CD4-positive, alpha-beta memory T cell (primary cell): ENCODE measurements at regions of chr15 and their contacts with region 1.

Region 1: GRCh38 chr15:91706322-91707032 is 147.0 kb upstream of the SLCO3A1 start:
- DNase-seq: peak; percentile 82 to 92 (median 86)
- H3K4me3 ChIP-seq: no peak overlapping the region
- H3K4me3 Mint-ChIP-seq: peak overlapping the region in 7 of 8 donors; percentile 19 to 89 (median 71)
- H3K27ac ChIP-seq: no peak overlapping the region
- H3K27ac Mint-ChIP-seq: peak overlapping the region; percentile 68 to 92 (median 81)
- H3K4me1 ChIP-seq: peaks cover 17% of the 10 kb centered on the region
- H3K4me1 Mint-ChIP-seq: peaks cover 8 to 32% (median 14%) of the 10 kb centered on the region in 4 donors
- H3K27me3 ChIP-seq: no peaks in the 10 kb centered on the region
- H3K27me3 Mint-ChIP-seq: peaks cover 0 to 2% of the 10 kb centered on the region in 2 donors

Region 2: GRCh38 chr15:91214675-91215590 is 491.5 kb before region 1 on chr15:
- CTCF ChIA-PET with region 1: no interaction called
- POLR2A ChIA-PET with region 1: no interaction called
- intact Hi-C with region 1: no loop called
- DNase-seq: no peak
- H3K4me3 ChIP-seq: no peak overlapping the region
- H3K4me3 Mint-ChIP-seq: no peak overlapping the region
- H3K27ac ChIP-seq: no peak overlapping the region
- H3K27ac Mint-ChIP-seq: no peak overlapping the region
- H3K4me1 ChIP-seq: no peaks in the 10 kb centered on the region
- H3K4me1 Mint-ChIP-seq: no peaks in the 10 kb centered on the region
- H3K27me3 ChIP-seq: no peaks in the 10 kb centered on the region
- H3K27me3 Mint-ChIP-seq: peaks cover 16 to 31% of the 10 kb centered on the region in 2 donors

Region 3: DNA sequence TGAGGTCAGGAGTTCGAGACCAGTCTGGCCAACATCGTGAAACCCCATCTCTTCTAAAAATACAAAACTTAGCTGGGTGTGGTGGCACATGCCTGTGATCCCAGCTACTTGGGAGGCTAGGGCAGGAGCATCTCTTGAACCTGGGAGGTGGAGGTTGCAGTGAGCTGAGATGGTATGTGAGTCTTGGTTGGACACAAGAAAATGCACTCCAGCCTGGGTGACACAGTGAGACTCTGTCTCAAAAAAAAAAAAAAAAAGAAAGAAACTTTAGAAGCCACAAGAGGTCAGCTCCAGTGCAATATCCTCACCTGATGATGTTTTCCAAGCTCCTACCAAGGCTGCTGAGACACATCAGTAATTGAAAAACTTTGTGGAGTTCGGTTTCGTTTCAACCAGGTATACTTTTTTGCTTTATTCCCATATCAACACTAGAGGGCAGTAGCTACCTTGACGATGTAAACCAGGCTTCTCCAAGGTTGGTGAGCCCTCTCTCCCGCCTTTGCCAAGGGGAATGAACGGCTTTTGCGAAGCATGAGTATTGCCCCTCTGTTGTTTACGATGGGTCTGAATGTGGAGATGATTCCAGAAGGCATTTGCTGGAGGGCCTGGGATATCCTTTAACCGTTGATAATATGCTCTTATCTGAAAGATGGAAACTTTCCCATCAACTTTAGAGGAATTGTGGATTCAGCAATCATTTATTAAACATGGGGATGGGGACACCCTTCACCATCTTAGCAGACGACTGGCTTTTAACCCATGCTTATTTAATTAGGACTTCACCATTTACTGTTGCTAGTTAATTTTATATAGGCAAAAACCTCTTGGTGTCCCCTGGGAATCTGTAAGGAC is 403.7 kb before region 1 on chr15:
- CTCF ChIA-PET with region 1: interaction called, 39 read pairs
- POLR2A ChIA-PET with region 1: no interaction called
- intact Hi-C with region 1: loop called (anchors 1 kb)
- DNase-seq: peak in 4 of 5 donors; percentile 54 to 63 (median 58)
- H3K4me3 ChIP-seq: no peak overlapping the region
- H3K4me3 Mint-ChIP-seq: peak overlapping the region in 6 of 8 donors; percentile 40 to 76 (median 58)
- H3K27ac ChIP-seq: no peak overlapping the region
- H3K27ac Mint-ChIP-seq: peak overlapping the region in 4 of 7 donors; percentile 1 to 65 (median 32)
- H3K4me1 ChIP-seq: peaks cover 47% of the 10 kb centered on the region
- H3K4me1 Mint-ChIP-seq: peaks cover 21 to 46% (median 34%) of the 10 kb centered on the region in 4 donors
- H3K27me3 ChIP-seq: no peaks in the 10 kb centered on the region
- H3K27me3 Mint-ChIP-seq: peaks cover 2 to 6% of the 10 kb centered on the region in 2 donors

Region 4: GRCh38 chr15:91694831-91695210 is 11.7 kb before region 1 on chr15:
- CTCF ChIA-PET with region 1: interaction called, 53 read pairs
- POLR2A ChIA-PET with region 1: no interaction called
- intact Hi-C with region 1: no loop called
- DNase-seq: no peak
- H3K4me3 ChIP-seq: no peak overlapping the region
- H3K4me3 Mint-ChIP-seq: no peak overlapping the region
- H3K27ac ChIP-seq: no peak overlapping the region
- H3K27ac Mint-ChIP-seq: no peak overlapping the region
- H3K4me1 ChIP-seq: no peaks in the 10 kb centered on the region
- H3K4me1 Mint-ChIP-seq: no peaks in the 10 kb centered on the region
- H3K27me3 ChIP-seq: no peaks in the 10 kb centered on the region
- H3K27me3 Mint-ChIP-seq: peaks cover 1 to 3% of the 10 kb centered on the region in 2 donors

Region 5: GRCh38 chr15:91867581-91868026 is 161.1 kb after region 1 on chr15:
- CTCF ChIA-PET with region 1: interaction called, 15 read pairs
- POLR2A ChIA-PET with region 1: no interaction called
- intact Hi-C with region 1: no loop called
- DNase-seq: no peak
- H3K4me3 ChIP-seq: no peak overlapping the region
- H3K4me3 Mint-ChIP-seq: peak overlapping the region; percentile 18 to 59 (median 52)
- H3K27ac ChIP-seq: no peak overlapping the region
- H3K27ac Mint-ChIP-seq: peak overlapping the region in 6 of 7 donors; percentile 17 to 72 (median 44)
- H3K4me1 ChIP-seq: peaks cover 91% of the 10 kb centered on the region
- H3K4me1 Mint-ChIP-seq: peaks cover 63 to 92% (median 76%) of the 10 kb centered on the region in 4 donors
- H3K27me3 ChIP-seq: no peaks in the 10 kb centered on the region
- H3K27me3 Mint-ChIP-seq: no peaks in the 10 kb centered on the region

Region 6: DNA sequence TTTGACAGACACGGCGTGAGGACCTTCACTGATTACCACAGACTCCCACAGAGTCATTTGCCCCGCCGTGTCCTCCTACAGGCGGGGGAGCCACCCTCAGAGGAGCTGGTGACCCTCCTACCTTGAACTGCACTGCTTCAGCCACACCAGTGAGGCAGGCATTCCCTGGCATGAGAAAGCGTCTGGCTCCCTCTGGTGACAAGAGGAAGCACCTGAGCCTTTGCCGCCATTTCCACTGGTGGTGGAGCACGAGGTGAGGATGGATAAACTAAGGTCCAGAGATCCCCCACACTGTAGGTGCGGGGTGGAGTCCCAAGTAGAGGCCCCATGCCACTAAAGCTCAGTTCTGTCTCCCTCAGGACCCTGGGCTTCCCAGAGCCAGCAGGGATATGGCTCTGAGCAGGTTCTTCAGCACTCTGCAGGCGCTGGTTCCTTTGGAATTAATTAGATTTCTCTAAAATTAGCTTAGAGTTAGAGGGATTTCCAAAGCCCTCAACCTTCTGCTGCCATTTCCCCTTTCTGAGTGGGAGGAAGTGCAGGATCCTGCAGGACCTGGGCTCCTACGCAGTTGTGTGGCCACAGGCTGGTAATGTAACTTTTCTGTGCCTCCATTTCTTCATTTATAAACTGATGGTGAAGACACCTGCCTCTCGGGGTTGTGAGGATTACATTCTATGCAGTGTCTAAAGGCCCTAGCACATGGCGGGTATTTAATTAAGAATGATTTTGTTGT is 371.0 kb after region 1 on chr15:
- CTCF ChIA-PET with region 1: interaction called, 114 read pairs
- POLR2A ChIA-PET with region 1: no interaction called
- intact Hi-C with region 1: loop called (anchors 1 kb)
- DNase-seq: peak; percentile 48 to 58 (median 55)
- H3K4me3 ChIP-seq: no peak overlapping the region
- H3K4me3 Mint-ChIP-seq: no peak overlapping the region
- H3K27ac ChIP-seq: no peak overlapping the region
- H3K27ac Mint-ChIP-seq: peak overlapping the region in 2 of 7 donors; percentile 42 to 69
- H3K4me1 ChIP-seq: peaks cover 51% of the 10 kb centered on the region
- H3K4me1 Mint-ChIP-seq: peaks cover 32 to 59% (median 40%) of the 10 kb centered on the region in 4 donors
- H3K27me3 ChIP-seq: no peaks in the 10 kb centered on the region
- H3K27me3 Mint-ChIP-seq: no peaks in the 10 kb centered on the region